ENCODE measurements at regions of chr9 and their contacts with region 1.

Region 1: GRCh38 chr9:11086561-11086960 is 473.8 kb upstream of the PTPRD start:
- DNase-seq: peak; percentile 12
- H3K4me3 ChIP-seq: no peak overlapping the region
- H3K27ac ChIP-seq: peak overlapping the region; percentile 8
- H3K4me1 ChIP-seq: no peaks in the 10 kb centered on the region
- H3K27me3 ChIP-seq: no peaks in the 10 kb centered on the region
- CTCF ChIP-seq: no peak

Region 2: DNA sequence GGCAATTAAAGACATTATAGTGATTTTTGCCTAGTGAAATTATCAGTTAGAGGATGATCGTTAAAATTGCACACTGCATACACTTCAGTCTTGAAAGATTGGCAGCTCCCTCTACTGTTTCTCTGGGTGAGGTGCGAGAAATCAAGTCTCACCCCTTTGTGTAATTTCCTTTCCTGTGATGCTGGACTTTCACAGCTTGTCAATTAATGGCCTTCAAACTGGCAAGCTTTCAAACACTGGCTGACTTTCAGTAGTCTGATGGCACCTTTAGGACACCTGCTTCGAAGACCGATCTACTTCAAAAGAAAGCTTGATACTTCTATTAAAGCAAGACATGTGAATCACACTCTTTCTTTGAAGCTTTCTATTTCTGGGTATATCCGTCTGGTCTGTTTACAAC is 233.0 kb after region 1 on chr9:
- CTCF ChIA-PET with region 1: no interaction called
- POLR2A ChIA-PET with region 1: no interaction called
- intact Hi-C with region 1: loop called (anchors 10 kb)
- DNase-seq: peak; percentile 46
- H3K4me3 ChIP-seq: no peak overlapping the region
- H3K27ac ChIP-seq: no peak overlapping the region
- H3K4me1 ChIP-seq: no peaks in the 10 kb centered on the region
- H3K27me3 ChIP-seq: no peaks in the 10 kb centered on the region
- CTCF ChIP-seq: peak; percentile 57

Region 3: DNA sequence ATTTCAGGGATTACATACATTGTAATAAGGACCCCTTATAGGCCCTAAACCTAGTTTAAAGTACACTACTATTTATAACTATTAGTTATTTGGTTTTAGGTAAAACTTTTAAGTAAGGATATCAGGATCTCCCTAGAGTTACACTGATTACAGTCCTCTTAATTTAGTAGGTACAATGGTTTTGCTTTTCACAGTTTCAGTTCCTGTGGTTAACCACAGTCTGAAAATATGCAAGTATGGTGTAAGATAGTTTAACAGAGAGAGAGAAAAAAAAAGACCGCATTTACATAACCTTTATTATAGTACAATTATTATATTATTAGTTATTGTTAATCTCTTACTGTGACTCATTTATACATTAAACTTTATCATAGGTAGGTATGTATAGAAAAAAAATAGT is 251.6 kb after region 1 on chr9:
- CTCF ChIA-PET with region 1: no interaction called
- POLR2A ChIA-PET with region 1: no interaction called
- intact Hi-C with region 1: no loop called
- DNase-seq: no peak
- H3K4me3 ChIP-seq: no peak overlapping the region
- H3K27ac ChIP-seq: no peak overlapping the region
- H3K4me1 ChIP-seq: no peaks in the 10 kb centered on the region
- H3K27me3 ChIP-seq: no peaks in the 10 kb centered on the region
- CTCF ChIP-seq: no peak

Region 4: GRCh38 chr9:11833056-11833455 is 746.5 kb after region 1 on chr9:
- CTCF ChIA-PET with region 1: no interaction called
- POLR2A ChIA-PET with region 1: no interaction called
- intact Hi-C with region 1: loop called (anchors 5 kb)
- DNase-seq: peak; percentile 7
- H3K4me3 ChIP-seq: no peak overlapping the region
- H3K27ac ChIP-seq: peak overlapping the region; percentile 62
- H3K4me1 ChIP-seq: peaks cover 31% of the 10 kb centered on the region
- H3K27me3 ChIP-seq: no peaks in the 10 kb centered on the region
- CTCF ChIP-seq: no peak

Region 5: DNA sequence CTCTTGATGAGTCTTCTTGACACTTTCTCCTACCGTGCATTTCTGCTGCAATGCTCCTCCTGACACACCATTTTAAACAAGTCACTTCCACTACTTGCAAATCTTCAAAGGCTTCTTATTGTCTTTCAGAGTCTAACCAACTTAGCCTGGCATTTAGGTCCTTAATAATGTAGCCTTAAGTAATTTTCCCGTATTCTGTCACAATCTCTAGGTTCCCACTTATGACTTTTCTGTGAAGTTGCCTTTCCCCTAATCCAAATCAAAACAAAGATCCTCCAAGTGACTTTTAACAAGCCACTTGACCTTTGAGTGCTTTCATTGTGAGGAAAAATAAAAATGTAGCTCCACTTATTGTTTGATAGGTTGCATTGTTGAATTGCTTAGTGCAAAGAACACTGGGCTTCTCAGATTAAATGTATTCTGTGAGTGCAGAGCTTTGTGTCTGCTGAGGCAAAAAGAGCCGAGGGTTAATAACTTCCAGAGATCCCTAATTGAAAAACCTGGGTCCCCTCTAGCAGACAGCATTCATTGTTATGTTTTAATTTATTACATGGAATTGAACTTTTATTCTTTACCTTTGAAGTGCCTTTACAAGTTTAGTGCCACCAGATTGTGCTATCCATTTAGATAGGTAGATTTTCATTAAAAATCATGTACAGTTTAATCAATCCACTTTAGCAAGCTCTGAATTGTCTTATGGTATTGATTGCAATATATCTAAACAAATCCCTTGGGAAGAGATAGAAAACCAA is 1264.9 kb after region 1 on chr9:
- CTCF ChIA-PET with region 1: no interaction called
- POLR2A ChIA-PET with region 1: no interaction called
- intact Hi-C with region 1: no loop called
- DNase-seq: no peak
- H3K4me3 ChIP-seq: no peak overlapping the region
- H3K27ac ChIP-seq: no peak overlapping the region
- H3K4me1 ChIP-seq: no peaks in the 10 kb centered on the region
- H3K27me3 ChIP-seq: no peaks in the 10 kb centered on the region
- CTCF ChIP-seq: no peak